ENCODE measurements at regions of chr14 and their contacts with region 1.

Region 1: DNA sequence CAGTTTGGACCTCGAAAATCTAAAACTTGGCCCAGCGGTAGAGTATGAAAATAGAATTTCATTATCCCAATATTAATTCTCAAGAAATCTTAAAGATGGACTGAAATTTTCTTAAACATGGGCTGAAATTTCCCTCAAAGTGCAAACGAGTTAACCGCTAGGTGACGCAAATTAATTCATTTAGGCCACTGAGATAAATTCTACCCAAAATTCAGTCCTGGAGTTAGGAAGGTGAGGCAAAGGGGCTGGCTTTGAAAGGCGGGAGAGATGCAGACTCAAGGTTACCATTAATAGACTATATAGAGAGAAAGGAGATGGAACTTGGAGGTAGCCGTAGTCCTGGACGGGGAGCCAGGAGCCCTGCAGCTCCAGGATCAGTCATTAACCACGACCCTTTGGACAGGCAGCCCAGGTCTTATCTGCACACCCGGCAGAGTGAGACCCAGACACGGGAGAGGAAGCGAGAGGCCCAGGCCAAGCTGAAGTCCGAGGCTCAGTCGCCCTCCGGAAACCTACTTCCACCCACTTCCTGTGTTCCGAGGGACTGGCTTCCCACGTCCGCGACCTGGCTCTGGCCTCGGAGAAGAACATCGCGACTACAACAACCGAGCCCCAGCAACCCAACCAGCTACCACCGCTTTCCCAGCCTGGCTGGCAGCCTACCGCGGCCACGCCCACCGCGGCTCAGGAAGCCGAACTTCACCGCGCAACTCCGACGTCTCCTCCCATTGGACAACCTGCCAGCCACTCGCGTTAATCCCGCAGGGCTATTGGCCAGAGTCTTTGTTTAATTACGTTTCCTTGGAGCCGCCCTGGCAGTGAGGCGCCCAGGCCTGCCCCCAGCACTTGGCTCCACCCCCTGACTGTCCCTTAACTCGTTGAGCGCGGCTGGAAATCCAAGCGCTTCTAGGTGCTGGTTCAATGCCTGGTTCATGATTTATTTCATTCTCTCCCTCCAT is at the start of gene EFCAB11:
- DNase-seq: peak; percentile 93
- ATAC-seq: peak; percentile 92
- H3K4me3 ChIP-seq: peak within 1 kb of the TSS; percentile 65
- H3K27ac ChIP-seq: peak within 1 kb of the TSS; percentile 94
- H3K4me1 ChIP-seq: peaks cover 6% of the 10 kb centered on the region
- H3K27me3 ChIP-seq: no peaks in the 10 kb centered on the region
- CTCF ChIP-seq: peak; percentile 4 to 27 (median 5); a peak in 2 of 6 replicates
- EP300 ChIP-seq: no peak; a peak in 1 of 4 replicates
- POLR2A ChIP-seq: peak; percentile 84
- RAD21 ChIP-seq: no peak
- polyA plus RNA-seq, gene EFCAB11: 35.8 to 37.4 TPM

Region 2: GRCh38 chr14:87992718-87993628 is 1961.4 kb before region 1 on chr14 and contains the start of gene GALC:
- CTCF ChIA-PET with region 1: no interaction called
- POLR2A ChIA-PET with region 1: no interaction called
- RAD21 ChIA-PET with region 1: no interaction called
- SMC1A ChIA-PET with region 1: no interaction called
- in situ Hi-C with region 1: no loop called
- intact Hi-C with region 1: loop called (anchors 10 kb)
- DNase-seq: peak; percentile 62
- ATAC-seq: peak; percentile 82
- H3K4me3 ChIP-seq: peak within 1 kb of the TSS; percentile 75
- H3K27ac ChIP-seq: peak within 1 kb of the TSS; percentile 84
- H3K4me1 ChIP-seq: peaks cover 26% of the 10 kb centered on the region
- H3K27me3 ChIP-seq: no peaks in the 10 kb centered on the region
- CTCF ChIP-seq: 0 out of 6 replicates have a peak, but pooled peaks of 1 of the 3 experiments have one; percentile 4
- EP300 ChIP-seq: peak; percentile 73 to 81; a peak in 3 of 4 replicates
- POLR2A ChIP-seq: peak; percentile 88
- RAD21 ChIP-seq: peak; percentile 23; the same call in 1 of the 2 replicates
- polyA plus RNA-seq, gene GALC: 1.3 to 1.9 TPM

Region 3: GRCh38 chr14:89936658-89937185 is 17.6 kb before region 1 on chr14:
- CTCF ChIA-PET with region 1: interaction called, 16 read pairs
- POLR2A ChIA-PET with region 1: interaction called, 3 read pairs
- RAD21 ChIA-PET with region 1: interaction called, 3 read pairs
- SMC1A ChIA-PET with region 1: interaction called, 3 read pairs
- in situ Hi-C with region 1: no loop called
- intact Hi-C with region 1: no loop called
- DNase-seq: no peak
- ATAC-seq: no peak
- H3K4me3 ChIP-seq: no peak overlapping the region
- H3K27ac ChIP-seq: no peak overlapping the region
- H3K4me1 ChIP-seq: no peaks in the 10 kb centered on the region
- H3K27me3 ChIP-seq: no peaks in the 10 kb centered on the region
- CTCF ChIP-seq: no peak; a peak in 1 of 6 replicates
- EP300 ChIP-seq: no peak
- POLR2A ChIP-seq: no peak
- RAD21 ChIP-seq: no peak

Region 4: DNA sequence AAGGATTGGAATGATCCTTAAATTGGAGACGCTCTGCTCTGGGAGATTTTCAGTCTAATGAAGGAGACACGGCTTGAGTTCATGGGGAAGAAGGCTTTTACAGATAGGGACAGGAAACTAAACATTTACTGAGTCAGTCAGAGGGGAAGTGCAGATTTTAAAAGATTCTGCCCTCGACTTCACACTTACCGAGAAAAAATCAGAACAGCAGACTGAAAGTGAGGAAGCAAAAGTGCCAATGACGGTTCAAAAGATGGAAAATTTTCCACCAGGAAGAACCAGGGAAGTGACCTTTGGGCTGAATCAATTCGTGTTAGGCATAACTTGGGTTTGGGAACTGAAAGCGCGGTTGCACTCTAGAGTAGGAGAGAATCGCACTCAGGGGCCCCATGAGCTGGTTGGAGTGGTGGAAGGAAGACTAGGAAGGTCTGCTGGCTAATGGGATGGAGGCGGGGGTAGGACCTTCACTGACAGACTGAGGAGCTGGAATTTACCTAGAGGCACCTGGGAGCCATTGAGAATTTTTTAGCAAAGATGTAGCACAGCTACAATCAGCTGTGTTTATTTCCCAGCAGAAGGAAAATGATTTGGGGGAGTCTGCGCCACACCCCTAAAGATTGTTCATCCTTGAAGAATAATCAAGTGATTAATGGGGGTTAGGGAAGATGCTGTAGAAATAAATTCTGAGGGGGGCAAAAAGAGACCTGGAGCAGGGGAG is 108.6 kb after region 1 on chr14:
- CTCF ChIA-PET with region 1: no interaction called
- POLR2A ChIA-PET with region 1: no interaction called
- RAD21 ChIA-PET with region 1: no interaction called
- SMC1A ChIA-PET with region 1: no interaction called
- in situ Hi-C with region 1: no loop called
- intact Hi-C with region 1: no loop called
- DNase-seq: no peak
- ATAC-seq: no peak
- H3K4me3 ChIP-seq: peak overlapping the region; percentile 44; the same call in 1 of the 2 replicates
- H3K27ac ChIP-seq: no peak overlapping the region
- H3K4me1 ChIP-seq: peaks cover 16% of the 10 kb centered on the region
- H3K27me3 ChIP-seq: peaks cover 19 to 30% of the 10 kb centered on the region in 2 experiments
- CTCF ChIP-seq: no peak
- EP300 ChIP-seq: no peak
- POLR2A ChIP-seq: no peak
- RAD21 ChIP-seq: no peak

Region 5: GRCh38 chr14:90383075-90383730 is 428.9 kb after region 1 on chr14:
- CTCF ChIA-PET with region 1: no interaction called
- POLR2A ChIA-PET with region 1: no interaction called
- RAD21 ChIA-PET with region 1: no interaction called
- SMC1A ChIA-PET with region 1: no interaction called
- in situ Hi-C with region 1: no loop called
- intact Hi-C with region 1: loop called (anchors 2 kb)
- DNase-seq: peak; percentile 98
- ATAC-seq: peak; percentile 96
- H3K4me3 ChIP-seq: peak overlapping the region; percentile 82
- H3K27ac ChIP-seq: peak overlapping the region; percentile 98
- H3K4me1 ChIP-seq: peaks cover 7% of the 10 kb centered on the region
- H3K27me3 ChIP-seq: no peaks in the 10 kb centered on the region
- CTCF ChIP-seq: no peak
- EP300 ChIP-seq: no peak
- POLR2A ChIP-seq: peak; percentile 91
- RAD21 ChIP-seq: no peak